ENCODE measurements at regions of chr6 and their contacts with region 1.

Region 1: GRCh38 chr6:89368107-89368506 is 15.6 kb upstream of the UBE2J1 start:
- DNase-seq: no peak
- H3K4me3 ChIP-seq: no peak overlapping the region
- H3K27ac ChIP-seq: no peak overlapping the region
- H3K4me1 ChIP-seq: peaks cover 0 to 22% (median 14%) of the 10 kb centered on the region in 3 donors
- H3K27me3 ChIP-seq: no peaks in the 10 kb centered on the region
- CTCF ChIP-seq: peak in 5 of 6 experiments; percentile 64 to 80 (median 71)
- POLR2A ChIP-seq: no peak

Region 2: DNA sequence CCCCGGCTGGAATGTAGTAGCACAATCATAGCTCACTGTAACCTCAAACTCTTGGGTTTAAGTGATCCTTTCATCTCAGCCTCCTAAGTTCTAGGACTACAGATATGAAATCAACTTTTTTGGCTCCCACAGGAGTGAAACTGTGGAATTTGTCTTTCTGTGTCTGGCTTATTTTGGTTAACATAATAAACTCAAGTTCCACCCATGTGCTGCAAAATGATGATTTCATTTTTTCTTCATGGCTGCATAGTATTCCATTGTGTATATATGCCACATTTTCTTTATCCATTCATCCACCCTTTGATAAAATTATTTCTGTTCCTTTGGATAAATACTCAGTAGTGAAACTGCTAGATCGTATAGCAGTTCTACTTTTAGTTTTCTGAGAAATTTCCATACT is 434.6 kb before region 1 on chr6:
- intact Hi-C with region 1: no loop called
- DNase-seq: no peak
- H3K4me3 ChIP-seq: no peak overlapping the region
- H3K27ac ChIP-seq: no peak overlapping the region
- H3K4me1 ChIP-seq: no peaks in the 10 kb centered on the region
- H3K27me3 ChIP-seq: no peaks in the 10 kb centered on the region
- CTCF ChIP-seq: no peak
- POLR2A ChIP-seq: no peak

Region 3: GRCh38 chr6:88989215-88989614 is 378.9 kb before region 1 on chr6:
- intact Hi-C with region 1: loop called (anchors 5 kb)
- DNase-seq: no peak
- H3K4me3 ChIP-seq: no peak overlapping the region
- H3K27ac ChIP-seq: no peak overlapping the region
- H3K4me1 ChIP-seq: no peaks in the 10 kb centered on the region
- H3K27me3 ChIP-seq: no peaks in the 10 kb centered on the region
- CTCF ChIP-seq: no peak
- POLR2A ChIP-seq: no peak

Region 4: GRCh38 chr6:89610149-89610642 is 242.1 kb after region 1 on chr6:
- intact Hi-C with region 1: loop called (anchors 5 kb)
- DNase-seq: peak; percentile 6
- H3K4me3 ChIP-seq: no peak overlapping the region
- H3K27ac ChIP-seq: no peak overlapping the region
- H3K4me1 ChIP-seq: no peaks in the 10 kb centered on the region
- H3K27me3 ChIP-seq: no peaks in the 10 kb centered on the region
- CTCF ChIP-seq: peak; percentile 73 to 93 (median 79)
- POLR2A ChIP-seq: no peak